WTC11 (cell line): ENCODE measurements at regions of chr15 and their contacts with region 1.

Region 1: DNA sequence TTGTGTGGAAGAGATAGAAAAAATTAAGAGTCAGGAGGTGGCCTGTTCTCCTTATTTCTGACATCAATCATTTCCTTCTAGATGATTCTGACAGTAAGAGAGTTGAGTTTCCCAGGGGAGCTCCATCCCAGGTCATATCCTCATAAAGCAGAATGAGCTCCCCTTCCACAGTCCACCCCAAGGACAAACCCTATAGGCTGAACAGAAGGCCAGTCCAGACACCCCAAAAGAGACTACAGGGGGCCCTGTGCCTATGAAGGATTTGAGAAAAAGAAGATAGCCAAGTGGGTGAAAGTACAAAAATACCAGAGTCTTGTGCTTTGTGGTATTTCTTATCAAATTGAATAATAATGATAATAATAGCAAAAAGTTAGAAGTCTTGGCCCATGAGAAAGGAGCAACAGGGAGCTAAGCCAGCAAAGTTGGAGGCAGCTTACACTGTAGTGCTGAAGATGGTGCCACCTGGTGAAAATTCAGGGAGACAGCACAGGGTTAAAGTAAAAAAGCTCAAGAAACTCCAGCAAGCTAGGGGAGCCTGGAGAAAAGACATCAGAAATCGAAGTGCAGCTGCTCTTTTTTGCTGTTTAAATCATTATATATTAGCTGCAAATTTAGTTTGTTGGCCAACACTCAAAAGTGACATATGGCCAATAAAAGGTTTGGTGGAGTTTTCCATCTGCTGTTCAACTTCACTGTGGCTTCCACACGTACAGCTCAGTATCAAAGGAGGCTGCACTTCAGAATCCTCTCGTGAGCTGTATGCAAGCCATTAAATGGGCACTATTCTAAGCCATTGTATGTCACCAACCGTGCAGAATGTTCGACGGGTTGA is 35.8 kb upstream of the SLC24A5 start:
- DNase-seq: peak; percentile 14
- ATAC-seq: peak; percentile 97
- H3K4me3 Mint-ChIP-seq: no peak overlapping the region
- H3K27ac Mint-ChIP-seq: no peak overlapping the region
- H3K4me1 Mint-ChIP-seq: peaks cover 5% of the 10 kb centered on the region
- H3K27me3 Mint-ChIP-seq: no peaks in the 10 kb centered on the region; the same call in 1 of the 2 replicates
- CTCF ChIP-seq: peak; percentile 44; the same call in 1 of the 2 replicates

Region 2: DNA sequence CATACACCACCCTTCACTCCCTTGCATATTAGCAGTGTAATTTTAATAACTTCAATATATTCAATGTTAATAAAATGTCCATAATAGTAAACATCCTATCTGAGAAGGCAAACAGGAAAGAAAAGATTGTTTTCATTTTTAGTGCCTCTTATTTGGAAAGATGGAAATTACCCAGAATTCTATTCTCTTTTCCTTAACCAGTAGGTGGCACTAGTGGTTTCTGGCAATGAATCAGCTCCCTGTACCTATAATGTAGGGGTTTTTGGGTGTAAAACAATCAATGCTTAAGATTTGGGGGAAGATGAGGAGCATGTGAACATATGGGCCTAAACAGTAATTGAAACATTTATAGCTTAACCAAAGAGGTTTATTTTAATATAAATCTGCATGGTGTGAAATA is 373.3 kb before region 1 on chr15:
- CTCF ChIA-PET with region 1: interaction called, 12 read pairs
- POLR2A ChIA-PET with region 1: no interaction called
- DNase-seq: no peak
- ATAC-seq: no peak
- H3K4me3 Mint-ChIP-seq: no peak overlapping the region
- H3K27ac Mint-ChIP-seq: no peak overlapping the region
- H3K4me1 Mint-ChIP-seq: peaks cover 21% of the 10 kb centered on the region
- H3K27me3 Mint-ChIP-seq: peaks cover 18% of the 10 kb centered on the region
- CTCF ChIP-seq: peak; percentile 42; the same call in 1 of the 2 replicates

Region 3: DNA sequence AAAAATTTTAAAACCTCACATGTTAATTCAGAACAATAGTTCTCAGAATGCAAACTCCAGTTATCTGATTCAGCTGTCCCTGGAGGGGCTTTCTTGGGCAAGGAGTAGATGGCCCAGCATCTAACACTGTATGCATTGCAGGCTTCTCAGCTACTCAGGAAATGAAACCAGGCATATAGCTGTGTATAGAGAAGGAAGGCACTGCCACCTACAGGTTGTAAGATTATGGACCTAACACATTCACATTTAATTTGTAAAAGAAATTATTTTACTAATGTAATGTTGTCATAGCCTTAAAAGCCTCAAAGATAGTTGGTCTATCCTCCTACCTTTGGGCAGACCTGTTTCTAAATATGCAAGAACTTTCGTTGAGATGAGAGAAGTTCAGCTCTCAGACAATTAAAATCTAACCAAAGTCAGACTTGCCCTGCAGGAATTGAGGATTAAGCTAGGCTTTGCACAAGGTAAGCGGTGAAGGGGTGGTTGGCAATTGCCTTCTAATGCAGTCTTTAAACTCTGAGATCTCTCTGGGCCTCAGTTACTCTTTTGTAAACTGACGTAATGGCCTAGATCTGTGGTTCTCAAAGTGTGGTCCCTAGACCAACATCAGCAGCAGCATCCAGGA is 97.0 kb before region 1 on chr15:
- CTCF ChIA-PET with region 1: interaction called, 97 read pairs
- POLR2A ChIA-PET with region 1: no interaction called
- DNase-seq: no peak
- ATAC-seq: peak; percentile 94
- H3K4me3 Mint-ChIP-seq: no peak overlapping the region
- H3K27ac Mint-ChIP-seq: no peak overlapping the region
- H3K4me1 Mint-ChIP-seq: peaks cover 8% of the 10 kb centered on the region
- H3K27me3 Mint-ChIP-seq: no peaks in the 10 kb centered on the region
- CTCF ChIP-seq: no peak; the same call in none of the 2 replicates

Region 4: GRCh38 chr15:48025118-48025517 is 59.9 kb before region 1 on chr15:
- CTCF ChIA-PET with region 1: interaction called, 12 read pairs
- POLR2A ChIA-PET with region 1: no interaction called
- DNase-seq: no peak
- ATAC-seq: no peak
- H3K4me3 Mint-ChIP-seq: no peak overlapping the region
- H3K27ac Mint-ChIP-seq: no peak overlapping the region
- H3K4me1 Mint-ChIP-seq: no peaks in the 10 kb centered on the region
- H3K27me3 Mint-ChIP-seq: no peaks in the 10 kb centered on the region
- CTCF ChIP-seq: no peak

Region 5: GRCh38 chr15:48103647-48104046 is 18.7 kb after region 1 on chr15:
- CTCF ChIA-PET with region 1: interaction called, 13 read pairs
- POLR2A ChIA-PET with region 1: no interaction called
- DNase-seq: no peak
- ATAC-seq: no peak
- H3K4me3 Mint-ChIP-seq: no peak overlapping the region
- H3K27ac Mint-ChIP-seq: no peak overlapping the region
- H3K4me1 Mint-ChIP-seq: no peaks in the 10 kb centered on the region
- H3K27me3 Mint-ChIP-seq: no peaks in the 10 kb centered on the region
- CTCF ChIP-seq: no peak

Region 6: DNA sequence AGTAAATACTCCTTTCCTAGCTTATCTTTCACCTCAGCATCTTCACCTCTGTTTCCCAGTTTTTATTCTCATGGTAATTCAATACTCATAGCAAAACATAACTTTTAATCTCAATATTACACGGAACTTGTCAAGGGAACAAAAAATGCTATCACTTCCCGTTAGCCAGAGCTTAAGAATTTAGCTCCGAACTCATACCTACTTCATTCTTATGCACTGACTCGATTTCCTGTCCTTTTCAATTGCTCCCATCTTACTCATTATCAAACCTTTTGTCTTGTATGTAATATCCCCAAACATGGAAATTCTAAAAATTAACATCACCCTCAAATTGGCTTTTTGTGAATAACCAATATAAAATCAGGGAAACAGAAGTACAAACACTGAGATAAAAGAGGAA is 64.9 kb after region 1 on chr15:
- CTCF ChIA-PET with region 1: no interaction called
- POLR2A ChIA-PET with region 1: no interaction called
- DNase-seq: no peak
- ATAC-seq: peak; percentile 52
- H3K4me3 Mint-ChIP-seq: no peak overlapping the region; the same call in 1 of the 2 replicates
- H3K27ac Mint-ChIP-seq: peak overlapping the region; percentile 86
- H3K4me1 Mint-ChIP-seq: peaks cover 26% of the 10 kb centered on the region
- H3K27me3 Mint-ChIP-seq: no peaks in the 10 kb centered on the region
- CTCF ChIP-seq: no peak

Region 7: GRCh38 chr15:48340111-48340510 is 255.1 kb after region 1 on chr15:
- CTCF ChIA-PET with region 1: no interaction called
- POLR2A ChIA-PET with region 1: no interaction called
- DNase-seq: no peak
- ATAC-seq: no peak
- H3K4me3 Mint-ChIP-seq: no peak overlapping the region
- H3K27ac Mint-ChIP-seq: 0 out of 2 replicates have a peak overlapping the region, but pooled peaks have one; percentile 60
- H3K4me1 Mint-ChIP-seq: peaks cover 8% of the 10 kb centered on the region
- H3K27me3 Mint-ChIP-seq: no peaks in the 10 kb centered on the region
- CTCF ChIP-seq: no peak

Region 8: DNA sequence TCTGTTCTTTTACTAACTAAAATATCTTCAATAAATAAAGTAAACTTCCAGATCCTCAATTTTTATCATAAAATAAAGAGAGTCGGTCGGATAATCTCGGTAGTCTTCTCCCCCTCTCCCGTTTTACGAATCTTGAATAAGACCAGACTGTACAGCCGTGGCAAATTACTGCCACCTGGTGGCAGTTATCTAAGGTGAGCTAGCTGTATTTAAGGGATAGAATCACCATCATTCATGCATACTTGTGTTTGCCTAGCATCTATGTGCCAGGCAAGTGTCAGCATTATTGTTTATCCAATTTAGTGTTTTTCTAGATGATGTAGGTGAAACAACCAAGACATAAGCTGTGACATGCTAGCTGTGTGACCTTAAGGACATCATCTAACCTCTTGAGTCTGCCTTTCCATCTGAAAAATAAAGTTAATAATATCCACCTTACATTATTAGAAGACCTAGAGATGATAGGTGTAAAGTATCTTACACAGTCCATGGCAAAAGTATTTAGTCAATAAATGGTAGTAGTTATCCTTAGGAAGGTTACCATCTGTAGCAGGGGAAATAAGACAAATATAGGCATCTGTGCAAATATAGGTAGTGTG is 267.6 kb after region 1 on chr15:
- CTCF ChIA-PET with region 1: interaction called, 10 read pairs
- POLR2A ChIA-PET with region 1: no interaction called
- DNase-seq: peak; percentile 50
- ATAC-seq: peak; percentile 82
- H3K4me3 Mint-ChIP-seq: no peak overlapping the region
- H3K27ac Mint-ChIP-seq: no peak overlapping the region
- H3K4me1 Mint-ChIP-seq: peaks cover 17% of the 10 kb centered on the region
- H3K27me3 Mint-ChIP-seq: no peaks in the 10 kb centered on the region
- CTCF ChIP-seq: peak; percentile 55